Activated CD4-positive, alpha-beta memory T cell treated with anti-CD3 and anti-CD28 coated beads, Interleukin-2, amount 10 ng/mL, durations not matched to agents 7 days and 5 days (primary cell): ENCODE measurements at regions of chr12 and their contacts with region 1.

Region 1: GRCh38 chr12:104314242-104314614 is 10.7 kb downstream of the EID3 start:
- DNase-seq: no peak
- H3K4me3 Mint-ChIP-seq: no peak overlapping the region
- H3K27ac Mint-ChIP-seq: peak overlapping the region; percentile 62
- H3K4me1 Mint-ChIP-seq: peaks cover 14% of the 10 kb centered on the region
- H3K27me3 Mint-ChIP-seq: no peaks in the 10 kb centered on the region

Region 2: GRCh38 chr12:104303538-104304151 is 10.6 kb before region 1 on chr12 and contains the start of gene EID3:
- CTCF ChIA-PET with region 1: no interaction called
- POLR2A ChIA-PET with region 1: interaction called, 17 read pairs
- DNase-seq: peak; percentile 92
- H3K4me3 Mint-ChIP-seq: peak within 1 kb of the TSS; percentile 83
- H3K27ac Mint-ChIP-seq: peak within 1 kb of the TSS; percentile 94
- H3K4me1 Mint-ChIP-seq: peaks cover 71% of the 10 kb centered on the region
- H3K27me3 Mint-ChIP-seq: no peaks in the 10 kb centered on the region
- total RNA-seq, gene EID3: 3.4 to 4.2 TPM